ENCODE measurements at regions of chr19 and their contacts with region 1.

Region 1: GRCh38 chr19:53792721-53793433 is 31.2 kb downstream of the NLRP12 start:
- DNase-seq: peak; percentile 93
- ATAC-seq: peak; percentile 97
- H3K4me3 Mint-ChIP-seq: no peak overlapping the region
- H3K27ac Mint-ChIP-seq: peak overlapping the region; percentile 79
- H3K4me1 Mint-ChIP-seq: peaks cover 25% of the 10 kb centered on the region
- H3K27me3 Mint-ChIP-seq: 0 out of 2 replicates have a peak, but pooled peaks cover under 1% of the 10 kb centered on the region
- CTCF ChIP-seq: peak; percentile 97

Region 2: DNA sequence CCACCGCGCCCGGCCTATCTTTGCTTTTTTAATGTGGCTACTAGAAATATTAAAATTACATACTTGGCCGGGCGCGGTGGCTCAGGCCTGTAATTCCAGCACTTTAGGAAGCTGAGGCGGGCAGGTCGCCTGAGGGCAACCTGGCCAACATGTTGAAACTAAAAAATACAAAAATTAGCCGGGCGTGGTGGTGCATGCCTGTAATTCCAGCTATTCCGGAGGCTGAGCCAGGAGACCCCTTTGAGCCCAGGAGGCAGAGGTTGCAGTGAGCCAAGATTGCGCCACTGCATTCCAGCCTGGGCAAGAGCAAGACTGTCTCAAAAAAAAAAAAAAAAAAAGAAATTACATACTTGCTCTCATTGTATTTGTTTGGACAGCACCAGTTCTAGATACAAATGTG is 195.9 kb before region 1 on chr19:
- CTCF ChIA-PET with region 1: interaction called, 20 read pairs
- POLR2A ChIA-PET with region 1: no interaction called
- DNase-seq: no peak
- ATAC-seq: no peak
- H3K4me3 Mint-ChIP-seq: no peak overlapping the region
- H3K27ac Mint-ChIP-seq: peak overlapping the region; percentile 97
- H3K4me1 Mint-ChIP-seq: peaks cover 53% of the 10 kb centered on the region
- H3K27me3 Mint-ChIP-seq: no peaks in the 10 kb centered on the region
- CTCF ChIP-seq: no peak

Region 3: GRCh38 chr19:53782698-53783097 is 10.2 kb before region 1 on chr19:
- CTCF ChIA-PET with region 1: interaction called, 55 read pairs
- POLR2A ChIA-PET with region 1: interaction called, 4 read pairs
- DNase-seq: peak; percentile 26
- ATAC-seq: peak; percentile 81
- H3K4me3 Mint-ChIP-seq: no peak overlapping the region
- H3K27ac Mint-ChIP-seq: peak overlapping the region; percentile 99
- H3K4me1 Mint-ChIP-seq: peaks cover 47% of the 10 kb centered on the region
- H3K27me3 Mint-ChIP-seq: peaks cover under 1% of the 10 kb centered on the region; the same call in 1 of the 2 replicates
- CTCF ChIP-seq: no peak

Region 4: GRCh38 chr19:53906211-53907192 is 113.6 kb after region 1 on chr19:
- CTCF ChIA-PET with region 1: interaction called, 11 read pairs
- POLR2A ChIA-PET with region 1: no interaction called
- DNase-seq: peak; percentile 89
- ATAC-seq: peak; percentile 15
- H3K4me3 Mint-ChIP-seq: peak overlapping the region; percentile 88
- H3K27ac Mint-ChIP-seq: no peak overlapping the region; the same call in 1 of the 2 replicates
- H3K4me1 Mint-ChIP-seq: peaks cover 34% of the 10 kb centered on the region
- H3K27me3 Mint-ChIP-seq: peaks cover 61% of the 10 kb centered on the region
- CTCF ChIP-seq: peak; percentile 98

Region 5: GRCh38 chr19:53947624-53948023 is 154.7 kb after region 1 on chr19:
- CTCF ChIA-PET with region 1: interaction called, 23 read pairs
- POLR2A ChIA-PET with region 1: no interaction called
- DNase-seq: no peak
- ATAC-seq: peak; percentile 83
- H3K4me3 Mint-ChIP-seq: no peak overlapping the region
- H3K27ac Mint-ChIP-seq: no peak overlapping the region; the same call in 1 of the 2 replicates
- H3K4me1 Mint-ChIP-seq: peaks cover 42% of the 10 kb centered on the region
- H3K27me3 Mint-ChIP-seq: no peaks in the 10 kb centered on the region
- CTCF ChIP-seq: no peak

Region 6: GRCh38 chr19:54035215-54036178 is 242.6 kb after region 1 on chr19:
- CTCF ChIA-PET with region 1: interaction called, 18 read pairs
- POLR2A ChIA-PET with region 1: no interaction called
- DNase-seq: no peak
- ATAC-seq: peak; percentile 71
- H3K4me3 Mint-ChIP-seq: peak overlapping the region; percentile 24
- H3K27ac Mint-ChIP-seq: peak overlapping the region; percentile 99
- H3K4me1 Mint-ChIP-seq: peaks cover 53% of the 10 kb centered on the region
- H3K27me3 Mint-ChIP-seq: no peaks in the 10 kb centered on the region
- CTCF ChIP-seq: no peak